Posterior vena cava (tissue), 2 donors: ENCODE measurements at regions of chr17 and their contacts with region 1.

Region 1: DNA sequence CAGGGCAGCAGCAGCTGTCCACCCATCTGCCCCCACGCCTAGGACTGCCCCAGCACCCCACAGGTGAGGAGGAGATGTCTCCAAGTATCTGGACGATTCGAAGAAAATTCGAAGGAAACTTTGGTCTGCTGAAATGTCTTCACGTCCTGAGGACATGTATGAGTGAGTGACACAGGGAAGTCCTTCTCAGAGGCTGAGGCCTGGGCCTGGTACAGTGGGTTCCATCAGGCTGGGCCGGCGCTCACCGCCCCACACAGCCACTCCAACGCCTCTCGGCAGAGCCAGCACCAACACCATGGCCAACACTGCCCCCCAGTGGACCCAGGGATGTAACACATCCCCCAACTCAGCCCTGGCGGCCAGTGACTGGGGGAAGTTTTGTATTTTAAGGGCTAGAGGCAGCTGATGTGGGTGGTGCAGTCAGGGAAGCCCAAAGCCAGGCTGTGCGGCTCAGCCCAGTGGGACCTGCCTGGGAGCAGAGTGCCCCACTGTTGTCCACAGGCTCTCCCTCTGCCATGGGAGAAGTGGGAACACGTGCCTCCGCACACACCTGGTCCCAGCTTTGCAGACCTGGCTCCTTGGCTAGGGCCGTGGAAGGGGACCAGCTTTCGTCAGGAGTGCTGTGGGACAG is 55.8 kb upstream of the FASN start:
- DNase-seq: peak; percentile 93

Region 2: GRCh38 chr17:81959362-81960129 is 194.3 kb before region 1 on chr17:
- intact Hi-C with region 1: loop called (anchors 5 kb)
- DNase-seq: peak; percentile 89

Region 3: DNA sequence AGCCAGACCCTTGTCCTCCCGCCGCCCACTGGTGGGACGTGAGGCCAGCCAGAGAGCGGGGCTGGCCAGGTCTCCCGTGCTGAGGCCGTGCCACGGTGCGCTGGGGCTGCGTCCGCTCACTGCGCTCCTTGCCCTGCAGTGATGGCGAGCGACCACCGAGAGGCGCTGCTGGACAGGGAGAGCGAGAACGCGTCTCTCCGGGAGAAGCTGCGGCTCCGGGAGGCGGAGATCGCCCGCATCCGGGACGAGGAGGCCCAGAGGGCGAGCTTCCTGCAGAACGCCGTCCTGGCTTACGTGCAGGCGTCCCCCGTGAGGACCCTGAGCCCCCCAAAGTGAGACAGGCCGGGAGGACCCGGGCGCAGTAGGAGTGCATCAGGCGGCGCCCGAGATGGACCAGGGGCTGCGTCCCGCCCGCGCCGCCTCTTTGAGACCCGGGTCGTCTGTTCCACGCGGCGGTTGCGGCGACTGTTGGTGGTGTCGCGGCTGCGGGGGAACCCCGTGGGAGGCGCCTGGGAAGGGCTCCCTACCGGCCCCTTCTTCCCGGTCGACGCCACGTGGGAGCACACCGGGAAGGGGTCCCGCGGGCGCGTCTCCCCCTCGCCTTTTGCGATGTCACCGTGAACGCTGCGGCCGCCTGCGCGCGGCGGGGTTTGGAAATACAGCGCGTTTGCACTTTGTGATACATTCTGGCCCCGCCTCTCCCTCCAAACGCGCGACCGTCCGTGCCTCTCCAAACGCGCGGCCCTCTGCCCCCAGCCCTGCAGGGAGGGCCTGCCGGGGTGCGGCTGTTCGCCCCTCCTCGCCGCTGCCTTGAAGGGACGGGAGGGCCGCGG is 123.2 kb before region 1 on chr17:
- intact Hi-C with region 1: loop called (anchors 2 kb)
- DNase-seq: peak; percentile 96

Region 4: DNA sequence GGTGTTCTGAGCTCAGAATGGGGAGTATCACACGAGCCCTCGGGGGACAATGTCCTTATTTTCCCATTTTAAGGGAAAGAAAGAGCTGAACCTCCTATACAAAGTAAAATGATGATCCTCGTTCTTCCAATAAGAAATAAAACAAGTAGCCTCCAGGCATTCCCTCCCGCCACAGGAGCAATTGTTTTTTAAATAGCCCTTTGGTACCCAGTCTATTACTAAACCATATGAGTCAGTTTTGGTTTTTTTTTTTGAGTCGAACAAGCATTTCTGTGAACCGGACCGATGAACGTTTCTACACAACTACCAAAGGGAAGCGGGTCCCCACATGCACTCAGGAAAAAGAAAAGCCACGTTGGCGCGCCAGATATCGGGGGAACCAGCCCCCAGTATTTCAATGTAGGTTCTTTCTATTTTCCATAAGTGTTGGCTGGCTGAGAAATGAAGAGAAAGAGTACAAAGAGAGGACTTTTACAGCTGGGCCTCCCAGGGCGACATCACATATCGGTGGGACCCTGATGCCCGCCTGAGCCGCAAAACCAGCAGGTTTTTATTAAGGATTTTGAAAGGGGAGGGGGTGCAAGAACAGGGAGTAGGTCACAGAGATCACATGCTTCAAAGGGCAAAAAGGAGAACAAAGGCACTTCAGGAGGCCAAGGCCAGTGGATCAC is 112.6 kb before region 1 on chr17:
- intact Hi-C with region 1: no loop called
- DNase-seq: no peak

Region 5: GRCh38 chr17:82170412-82170961 is 16.6 kb after region 1 on chr17:
- intact Hi-C with region 1: no loop called
- DNase-seq: no peak